ENCODE measurements at regions of chr6 and their contacts with region 1.

Region 1: DNA sequence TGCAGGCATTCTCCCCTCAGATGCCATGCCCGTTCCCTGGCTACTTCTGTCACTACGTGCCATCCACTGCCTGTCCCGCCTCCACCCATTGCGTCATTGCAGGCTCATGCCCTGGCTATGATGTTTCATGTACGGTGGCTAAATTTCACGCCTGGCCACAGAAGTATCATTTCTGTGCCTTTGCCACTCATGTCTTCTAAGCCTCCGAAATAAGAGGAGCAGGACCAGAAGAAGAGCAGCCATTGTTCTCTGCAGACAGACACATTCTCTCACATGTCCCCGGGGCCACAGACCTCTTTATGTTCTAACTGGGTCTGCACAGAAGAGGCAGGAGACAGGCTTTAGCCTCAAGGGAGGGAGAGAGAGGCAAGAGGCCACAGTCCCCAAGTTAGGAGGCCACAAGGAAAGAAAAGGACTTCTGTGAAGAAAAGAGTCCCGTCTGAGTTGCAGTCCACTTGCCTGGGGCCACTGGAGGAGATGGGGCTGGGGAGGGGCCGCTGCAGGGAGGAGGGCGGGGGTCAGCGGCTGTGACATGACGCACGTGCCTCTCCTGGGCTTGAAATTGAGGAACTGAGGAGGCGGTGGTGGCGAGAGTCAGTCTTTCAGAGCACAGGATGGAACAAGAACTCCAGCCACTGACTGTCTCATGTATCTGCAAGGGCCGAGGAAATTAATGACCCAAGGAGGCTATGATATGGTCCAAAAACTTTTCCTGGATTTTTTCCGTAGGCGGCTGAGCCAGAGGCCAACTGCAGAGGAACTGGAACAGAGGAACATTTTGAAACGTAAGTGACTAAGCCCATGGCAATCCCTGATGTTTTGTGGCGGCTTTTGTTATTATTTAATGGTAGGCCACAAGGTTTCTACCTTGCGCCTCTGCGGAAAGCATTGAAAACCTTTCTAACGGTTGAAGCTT is 55.9 kb downstream of the TBC1D7 start:
- H3K4me3 Mint-ChIP-seq: peak overlapping the region; percentile 58
- H3K27ac Mint-ChIP-seq: peak overlapping the region; percentile 84
- H3K4me1 Mint-ChIP-seq: peaks cover 61% of the 10 kb centered on the region
- H3K27me3 Mint-ChIP-seq: peaks cover 24% of the 10 kb centered on the region

Region 2: DNA sequence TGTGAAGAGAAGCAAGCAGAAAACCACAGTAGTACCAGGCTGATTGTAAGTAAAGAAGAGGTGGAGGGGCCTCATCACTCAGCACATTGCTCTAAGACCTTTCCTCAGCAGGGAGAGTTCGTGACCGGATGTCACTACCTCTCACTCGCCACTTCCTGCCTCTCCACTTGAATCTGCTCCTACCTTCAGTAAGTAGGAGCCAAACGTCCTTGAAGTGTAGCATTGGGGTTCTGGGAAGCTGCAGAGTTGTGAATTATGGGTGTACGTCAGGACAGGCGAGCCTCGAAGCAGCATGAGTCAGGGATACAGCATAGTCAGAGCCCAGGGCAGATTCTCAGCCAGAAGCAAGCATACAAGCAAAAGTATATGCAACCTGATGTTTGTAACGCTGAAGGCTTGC is 331.0 kb before region 1 on chr6:
- intact Hi-C with region 1: loop called (anchors 10 kb)
- H3K4me3 Mint-ChIP-seq: no peak overlapping the region
- H3K27ac Mint-ChIP-seq: no peak overlapping the region
- H3K4me1 Mint-ChIP-seq: peaks cover 46% of the 10 kb centered on the region
- H3K27me3 Mint-ChIP-seq: peaks cover 14% of the 10 kb centered on the region

Region 3: GRCh38 chr6:13229205-13230085 is 42.9 kb before region 1 on chr6:
- intact Hi-C with region 1: no loop called
- H3K4me3 Mint-ChIP-seq: no peak overlapping the region
- H3K27ac Mint-ChIP-seq: no peak overlapping the region
- H3K4me1 Mint-ChIP-seq: no peaks in the 10 kb centered on the region
- H3K27me3 Mint-ChIP-seq: peaks cover 1% of the 10 kb centered on the region

Measured in dendritic cell treated with granulocyte-macrophage colony-stimulating factor and Interleukin-4, amounts not matched to agents 40 ng/mL and 50 ng/mL, for 4 days (primary cell).